A673 (cell line): ENCODE measurements at regions of chr1 and their contacts with region 1.

Region 1: GRCh38 chr1:231515748-231516147 is 12.7 kb upstream of the TSNAX start:
- DNase-seq: no peak
- H3K4me3 ChIP-seq: no peak overlapping the region
- H3K27ac ChIP-seq: no peak overlapping the region
- H3K4me1 ChIP-seq: no peaks in the 10 kb centered on the region
- H3K27me3 ChIP-seq: no peaks in the 10 kb centered on the region
- CTCF ChIP-seq: no peak

Region 2: DNA sequence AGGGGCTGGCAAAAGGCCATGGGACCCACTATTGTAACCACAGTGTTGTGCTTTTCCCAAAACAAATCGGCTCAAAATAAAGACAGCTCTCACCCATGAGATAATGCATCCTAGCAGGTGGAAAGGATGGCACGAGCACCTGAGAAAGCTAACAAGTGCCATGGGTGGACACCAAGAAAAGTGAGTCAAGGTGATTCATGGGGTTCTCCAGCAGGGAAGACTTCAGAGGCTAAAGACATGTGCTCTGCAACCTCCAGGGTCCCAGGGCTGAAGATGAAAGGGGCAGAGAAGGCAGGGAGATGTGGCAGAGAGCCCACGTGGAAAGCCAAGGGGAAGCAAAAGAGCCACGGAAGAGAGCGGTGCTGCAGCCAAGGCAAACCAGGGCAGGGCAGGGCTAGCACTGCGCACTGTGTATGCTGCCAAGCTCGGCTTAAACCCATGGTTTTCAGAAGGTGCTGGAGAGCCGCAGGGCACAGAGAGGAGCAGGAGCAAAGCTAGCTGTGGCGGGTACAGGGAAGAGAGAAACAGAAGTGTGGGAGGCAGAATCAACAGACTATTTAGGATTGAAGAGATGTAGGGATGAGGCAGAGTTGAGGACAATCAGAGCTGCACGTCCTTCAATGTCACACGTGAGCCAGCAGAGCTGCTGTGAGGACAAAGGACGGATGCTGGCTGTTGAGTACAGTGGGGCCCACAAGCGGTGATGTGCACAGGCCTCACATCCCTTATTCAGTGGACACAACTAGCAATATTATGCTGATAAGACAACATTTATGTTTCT is 605.6 kb before region 1 on chr1:
- CTCF ChIA-PET with region 1: no interaction called
- POLR2A ChIA-PET with region 1: no interaction called
- intact Hi-C with region 1: no loop called
- DNase-seq: no peak
- H3K4me3 ChIP-seq: no peak overlapping the region
- H3K27ac ChIP-seq: no peak overlapping the region
- H3K4me1 ChIP-seq: no peaks in the 10 kb centered on the region
- H3K27me3 ChIP-seq: no peaks in the 10 kb centered on the region
- CTCF ChIP-seq: no peak

Region 3: GRCh38 chr1:231407547-231408396 is 108.0 kb before region 1 on chr1:
- CTCF ChIA-PET with region 1: no interaction called
- POLR2A ChIA-PET with region 1: no interaction called
- intact Hi-C with region 1: no loop called
- DNase-seq: no peak
- H3K4me3 ChIP-seq: no peak overlapping the region
- H3K27ac ChIP-seq: no peak overlapping the region
- H3K4me1 ChIP-seq: peaks cover 7% of the 10 kb centered on the region
- H3K27me3 ChIP-seq: no peaks in the 10 kb centered on the region
- CTCF ChIP-seq: no peak

Region 4: GRCh38 chr1:231528172-231529029 is 12.7 kb after region 1 on chr1 and contains the start of gene TSNAX:
- CTCF ChIA-PET with region 1: no interaction called
- POLR2A ChIA-PET with region 1: no interaction called
- intact Hi-C with region 1: no loop called
- DNase-seq: peak; percentile 96
- H3K4me3 ChIP-seq: peak within 1 kb of the TSS; percentile 87
- H3K27ac ChIP-seq: peak within 1 kb of the TSS; percentile 93
- H3K4me1 ChIP-seq: no peaks in the 10 kb centered on the region
- H3K27me3 ChIP-seq: no peaks in the 10 kb centered on the region
- CTCF ChIP-seq: no peak
- total RNA-seq, gene TSNAX: 56.1 and 60.0 TPM in 2 replicates

Region 5: GRCh38 chr1:231566496-231566895 is 50.7 kb after region 1 on chr1:
- CTCF ChIA-PET with region 1: no interaction called
- POLR2A ChIA-PET with region 1: no interaction called
- intact Hi-C with region 1: loop called (anchors 5 kb)
- DNase-seq: no peak
- H3K4me3 ChIP-seq: no peak overlapping the region
- H3K27ac ChIP-seq: no peak overlapping the region
- H3K4me1 ChIP-seq: no peaks in the 10 kb centered on the region
- H3K27me3 ChIP-seq: no peaks in the 10 kb centered on the region
- CTCF ChIP-seq: no peak

Region 6: GRCh38 chr1:232695621-232696385 is 1180.1 kb after region 1 on chr1:
- CTCF ChIA-PET with region 1: no interaction called
- POLR2A ChIA-PET with region 1: no interaction called
- intact Hi-C with region 1: no loop called
- DNase-seq: no peak
- H3K4me3 ChIP-seq: no peak overlapping the region
- H3K27ac ChIP-seq: no peak overlapping the region
- H3K4me1 ChIP-seq: no peaks in the 10 kb centered on the region
- H3K27me3 ChIP-seq: no peaks in the 10 kb centered on the region
- CTCF ChIP-seq: no peak